ENCODE measurements at regions of chr5 and their contacts with region 1.

Region 1: DNA sequence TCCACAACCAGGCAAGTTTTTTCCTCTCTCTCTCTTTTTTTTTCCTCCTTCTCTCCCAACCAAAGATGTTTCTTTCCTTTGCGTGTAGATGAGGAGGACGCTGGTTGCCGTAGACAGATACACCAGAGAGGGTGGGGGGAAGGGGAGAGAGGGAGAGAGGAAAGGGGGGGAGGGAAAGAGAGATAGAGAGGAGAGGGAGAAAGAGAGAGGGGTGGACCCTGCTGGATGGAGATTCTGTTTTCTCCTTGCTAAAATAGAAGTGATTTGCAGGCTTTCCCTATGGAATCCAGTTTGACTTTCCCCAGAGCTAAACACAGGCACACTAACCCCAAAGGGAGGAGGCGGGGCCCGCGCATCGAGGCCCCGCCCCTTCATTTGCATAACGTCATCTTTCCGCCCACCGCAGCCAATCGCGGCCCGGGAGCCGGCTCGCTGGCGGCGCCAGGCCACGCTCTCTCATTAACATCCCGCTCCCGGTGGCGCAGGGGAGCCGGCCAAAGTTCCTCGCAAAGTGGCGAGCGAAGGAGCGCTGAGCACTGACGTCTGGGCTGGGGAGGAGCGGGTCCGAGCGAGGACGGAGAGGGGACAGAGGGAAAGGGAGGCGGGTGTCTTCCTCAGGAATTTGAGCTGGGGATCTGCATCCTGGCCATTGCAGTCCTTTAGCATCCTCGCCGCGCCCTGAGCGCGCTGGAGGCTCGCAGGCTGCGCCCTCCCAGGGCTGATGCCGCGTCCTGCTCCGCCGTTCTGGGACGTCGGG is 487 bp upstream of the EBF1 start:
- DNase-seq: peak; percentile 96
- ATAC-seq: peak; percentile 70
- H3K4me3 ChIP-seq: peak overlapping the region; percentile 86 to 99 (median 90)
- H3K4me3 Mint-ChIP-seq: peak overlapping the region; percentile 100
- H3K27ac ChIP-seq: peak overlapping the region; percentile 79 to 92
- H3K27ac Mint-ChIP-seq: peak overlapping the region; percentile 96
- H3K4me1 ChIP-seq: peaks cover 62% of the 10 kb centered on the region in 2 donors
- H3K4me1 Mint-ChIP-seq: peaks cover 66% of the 10 kb centered on the region
- H3K27me3 ChIP-seq: no peaks in the 10 kb centered on the region
- H3K27me3 Mint-ChIP-seq: no peaks in the 10 kb centered on the region
- CTCF ChIP-seq: no peak

Region 2: GRCh38 chr5:158777647-158778350 is 322.4 kb before region 1 on chr5:
- CTCF ChIA-PET with region 1: interaction called, 4 read pairs
- POLR2A ChIA-PET with region 1: no interaction called
- intact Hi-C with region 1: loop called (anchors 2 kb)
- DNase-seq: no peak
- ATAC-seq: no peak
- H3K4me3 ChIP-seq: no peak overlapping the region
- H3K4me3 Mint-ChIP-seq: peak overlapping the region; percentile 27
- H3K27ac ChIP-seq: peak overlapping the region in 1 of 2 donors; percentile 10
- H3K27ac Mint-ChIP-seq: peak overlapping the region; percentile 64
- H3K4me1 ChIP-seq: peaks cover 82 to 89% of the 10 kb centered on the region in 2 donors
- H3K4me1 Mint-ChIP-seq: peaks cover 89% of the 10 kb centered on the region
- H3K27me3 ChIP-seq: no peaks in the 10 kb centered on the region
- H3K27me3 Mint-ChIP-seq: no peaks in the 10 kb centered on the region
- CTCF ChIP-seq: no peak

Region 3: GRCh38 chr5:158880483-158881001 is 219.7 kb before region 1 on chr5:
- CTCF ChIA-PET with region 1: interaction called, 15 read pairs
- POLR2A ChIA-PET with region 1: no interaction called
- intact Hi-C with region 1: loop called (anchors 2 kb)
- DNase-seq: peak; percentile 54
- ATAC-seq: peak; percentile 25
- H3K4me3 ChIP-seq: peak overlapping the region in 2 of 5 experiments; percentile 13 to 29
- H3K4me3 Mint-ChIP-seq: peak overlapping the region; percentile 73
- H3K27ac ChIP-seq: peak overlapping the region; percentile 71 to 85
- H3K27ac Mint-ChIP-seq: peak overlapping the region; percentile 89
- H3K4me1 ChIP-seq: peaks cover 89 to 97% of the 10 kb centered on the region in 2 donors
- H3K4me1 Mint-ChIP-seq: peaks cover 92% of the 10 kb centered on the region
- H3K27me3 ChIP-seq: no peaks in the 10 kb centered on the region
- H3K27me3 Mint-ChIP-seq: no peaks in the 10 kb centered on the region
- CTCF ChIP-seq: no peak

Region 4: GRCh38 chr5:159083548-159084452 is 16.4 kb before region 1 on chr5:
- CTCF ChIA-PET with region 1: interaction called, 4 read pairs
- POLR2A ChIA-PET with region 1: interaction called, 3 read pairs
- intact Hi-C with region 1: loop called (anchors 1 kb)
- DNase-seq: peak; percentile 78
- ATAC-seq: peak; percentile 90
- H3K4me3 ChIP-seq: no peak overlapping the region
- H3K4me3 Mint-ChIP-seq: peak overlapping the region; percentile 44
- H3K27ac ChIP-seq: peak overlapping the region; percentile 1 to 45
- H3K27ac Mint-ChIP-seq: peak overlapping the region; percentile 78
- H3K4me1 ChIP-seq: peaks cover 19 to 20% of the 10 kb centered on the region in 2 donors
- H3K4me1 Mint-ChIP-seq: peaks cover 69% of the 10 kb centered on the region
- H3K27me3 ChIP-seq: no peaks in the 10 kb centered on the region
- H3K27me3 Mint-ChIP-seq: no peaks in the 10 kb centered on the region
- CTCF ChIP-seq: no peak

Region 5: DNA sequence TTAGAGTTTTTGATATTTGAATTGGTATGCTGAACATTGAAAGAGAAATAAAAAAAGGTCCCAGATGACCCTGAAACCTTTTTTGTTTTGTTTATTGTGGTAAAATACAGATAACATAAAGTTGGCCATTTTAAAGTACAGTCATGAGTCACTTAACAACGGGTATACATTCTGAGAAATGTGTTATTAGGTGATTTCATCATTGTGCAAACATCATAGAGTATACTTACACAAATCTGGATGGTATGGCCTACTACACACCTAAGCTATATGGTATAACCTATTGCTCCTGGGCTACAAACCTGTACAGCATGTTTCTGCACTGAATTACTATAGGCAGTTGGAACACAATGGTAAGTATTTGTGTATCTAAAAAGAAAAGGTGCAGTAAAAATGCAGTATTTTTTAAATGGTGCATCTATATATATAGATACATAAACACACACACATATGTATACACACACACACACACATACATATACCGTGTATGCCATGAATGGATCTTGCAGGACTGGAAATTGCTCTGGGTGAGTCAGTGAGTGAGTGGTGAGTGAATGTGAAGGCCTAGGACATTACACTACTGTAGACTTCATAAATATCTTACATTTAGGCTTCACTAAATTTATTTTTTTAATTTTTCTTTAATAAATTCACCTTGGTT is 939.7 kb after region 1 on chr5:
- CTCF ChIA-PET with region 1: no interaction called
- POLR2A ChIA-PET with region 1: no interaction called
- intact Hi-C with region 1: no loop called
- DNase-seq: no peak
- ATAC-seq: no peak
- H3K4me3 ChIP-seq: no peak overlapping the region
- H3K4me3 Mint-ChIP-seq: no peak overlapping the region
- H3K27ac ChIP-seq: no peak overlapping the region
- H3K27ac Mint-ChIP-seq: no peak overlapping the region
- H3K4me1 ChIP-seq: no peaks in the 10 kb centered on the region
- H3K4me1 Mint-ChIP-seq: no peaks in the 10 kb centered on the region
- H3K27me3 ChIP-seq: no peaks in the 10 kb centered on the region
- H3K27me3 Mint-ChIP-seq: no peaks in the 10 kb centered on the region
- CTCF ChIP-seq: no peak

Measured in B cell (primary cell).